MCF 10A (cell line): ENCODE measurements at regions of chr4 and their contacts with region 1.

Region 1: GRCh38 chr4:127698789-127699200 is 31.4 kb upstream of the SLC25A31 start:
- DNase-seq: peak; percentile 84
- H3K4me3 Mint-ChIP-seq: peak overlapping the region; percentile 59
- H3K27ac Mint-ChIP-seq: no peak overlapping the region
- H3K4me1 Mint-ChIP-seq: peaks cover 5% of the 10 kb centered on the region
- H3K27me3 Mint-ChIP-seq: no peaks in the 10 kb centered on the region
- CTCF ChIP-seq: no peak

Region 2: DNA sequence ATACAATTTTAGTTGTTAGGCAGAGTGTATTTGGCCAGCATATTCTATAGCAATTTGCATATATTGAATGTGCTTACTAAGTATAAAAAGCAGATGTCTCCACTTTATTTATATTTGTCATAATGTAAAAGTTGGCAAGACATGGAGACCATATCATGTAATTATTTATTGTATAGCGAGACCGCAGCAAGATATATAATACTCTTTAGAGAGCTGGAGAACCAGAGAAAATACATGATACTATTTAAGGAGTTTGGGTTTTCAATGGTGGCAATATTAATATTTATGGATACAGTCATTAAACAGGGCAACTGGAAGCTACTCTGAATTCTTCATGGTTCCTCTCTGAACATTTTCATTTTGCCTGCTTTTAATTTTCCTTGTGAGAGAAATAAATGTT is 31.0 kb before region 1 on chr4:
- CTCF ChIA-PET with region 1: interaction called, 11 read pairs
- POLR2A ChIA-PET with region 1: no interaction called
- intact Hi-C with region 1: no loop called
- DNase-seq: no peak
- H3K4me3 Mint-ChIP-seq: no peak overlapping the region
- H3K27ac Mint-ChIP-seq: no peak overlapping the region
- H3K4me1 Mint-ChIP-seq: no peaks in the 10 kb centered on the region
- H3K27me3 Mint-ChIP-seq: no peaks in the 10 kb centered on the region
- CTCF ChIP-seq: no peak

Region 3: GRCh38 chr4:127708985-127709384 is 10.2 kb after region 1 on chr4:
- CTCF ChIA-PET with region 1: interaction called, 4 read pairs
- POLR2A ChIA-PET with region 1: interaction called, 40 read pairs
- intact Hi-C with region 1: no loop called
- DNase-seq: peak; percentile 94
- H3K4me3 Mint-ChIP-seq: peak overlapping the region; percentile 49
- H3K27ac Mint-ChIP-seq: peak overlapping the region; percentile 78
- H3K4me1 Mint-ChIP-seq: peaks cover 15% of the 10 kb centered on the region
- H3K27me3 Mint-ChIP-seq: no peaks in the 10 kb centered on the region
- CTCF ChIP-seq: no peak

Region 4: DNA sequence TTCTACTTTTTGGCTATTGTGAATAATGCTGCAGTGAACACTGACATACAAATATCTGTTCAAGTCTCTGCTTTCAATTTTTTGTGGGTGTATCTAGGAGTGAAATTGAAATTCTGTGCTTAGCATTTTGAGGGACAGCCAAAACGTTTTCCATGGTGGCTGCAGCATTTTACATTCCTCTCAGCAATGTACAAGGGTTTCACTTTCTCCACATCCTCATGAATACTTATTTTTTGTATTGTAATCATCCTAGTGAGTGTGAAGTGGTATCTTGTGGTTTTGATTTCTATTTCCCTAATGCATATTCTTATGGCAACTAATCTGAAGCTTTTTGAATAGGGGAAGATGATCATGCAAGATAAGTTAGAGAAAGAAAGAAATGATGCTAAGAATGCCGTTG is 123.6 kb after region 1 on chr4:
- CTCF ChIA-PET with region 1: no interaction called
- POLR2A ChIA-PET with region 1: no interaction called
- intact Hi-C with region 1: no loop called
- DNase-seq: no peak
- H3K4me3 Mint-ChIP-seq: no peak overlapping the region
- H3K27ac Mint-ChIP-seq: no peak overlapping the region
- H3K4me1 Mint-ChIP-seq: no peaks in the 10 kb centered on the region
- H3K27me3 Mint-ChIP-seq: no peaks in the 10 kb centered on the region
- CTCF ChIP-seq: no peak